Vagina (tissue), 2 donors: ENCODE measurements at regions of chr20 and their contacts with region 1.

Region 1: DNA sequence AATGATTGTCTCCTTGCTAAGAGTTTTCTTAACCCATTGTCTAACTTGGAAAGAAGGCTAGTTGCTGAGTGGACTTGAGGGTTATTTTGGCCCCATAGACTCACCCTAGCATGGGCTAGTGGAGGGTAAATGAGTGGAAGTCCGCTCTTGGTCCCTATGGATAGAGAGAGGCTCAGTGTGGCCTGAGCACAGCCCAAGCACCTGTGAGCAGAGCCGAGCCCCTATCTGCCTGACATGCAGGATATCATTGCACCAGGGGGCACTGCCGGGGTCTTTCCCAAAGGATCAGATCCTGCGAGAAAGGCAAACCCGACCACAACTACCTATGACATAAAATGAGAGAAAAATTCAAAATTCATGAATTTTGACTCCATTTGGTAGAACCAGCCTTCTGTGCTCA is 70.6 kb upstream of the GGTLC1 start:
- DNase-seq: no peak
- H3K4me3 ChIP-seq: no peak overlapping the region
- H3K27ac ChIP-seq: no peak overlapping the region
- H3K4me1 ChIP-seq: no peaks in the 10 kb centered on the region
- H3K27me3 ChIP-seq: no peaks in the 10 kb centered on the region
- CTCF ChIP-seq: no peak
- POLR2A ChIP-seq: no peak

Region 2: GRCh38 chr20:25310268-25310920 is 1251.2 kb after region 1 on chr20:
- intact Hi-C with region 1: loop called (anchors 5 kb)
- DNase-seq: no peak
- H3K4me3 ChIP-seq: peak overlapping the region in 1 of 2 donors; percentile 8
- H3K27ac ChIP-seq: peak overlapping the region; percentile 77
- H3K4me1 ChIP-seq: peaks cover 27% of the 10 kb centered on the region
- H3K27me3 ChIP-seq: no peaks in the 10 kb centered on the region
- CTCF ChIP-seq: peak in 1 of 3 experiments; percentile 38
- POLR2A ChIP-seq: peak in 1 of 2 donors; percentile 27